Naive thymus-derived CD8-positive, alpha-beta T cell (primary cell): ENCODE measurements at regions of chr1 and their contacts with region 1.

Region 1: GRCh38 chr1:43706598-43707495 is 489 bp upstream of the ST3GAL3 start:
- DNase-seq: peak; percentile 85 to 93 (median 88)
- ATAC-seq: peak; percentile 97
- H3K4me3 Mint-ChIP-seq: peak overlapping the region; percentile 80 to 92 (median 87)
- H3K27ac Mint-ChIP-seq: peak overlapping the region in 8 of 10 donors; percentile 8 to 91 (median 84)
- H3K4me1 Mint-ChIP-seq: peaks cover 23 to 36% (median 32%) of the 10 kb centered on the region in 4 donors
- H3K27me3 Mint-ChIP-seq: no peaks in the 10 kb centered on the region

Region 2: DNA sequence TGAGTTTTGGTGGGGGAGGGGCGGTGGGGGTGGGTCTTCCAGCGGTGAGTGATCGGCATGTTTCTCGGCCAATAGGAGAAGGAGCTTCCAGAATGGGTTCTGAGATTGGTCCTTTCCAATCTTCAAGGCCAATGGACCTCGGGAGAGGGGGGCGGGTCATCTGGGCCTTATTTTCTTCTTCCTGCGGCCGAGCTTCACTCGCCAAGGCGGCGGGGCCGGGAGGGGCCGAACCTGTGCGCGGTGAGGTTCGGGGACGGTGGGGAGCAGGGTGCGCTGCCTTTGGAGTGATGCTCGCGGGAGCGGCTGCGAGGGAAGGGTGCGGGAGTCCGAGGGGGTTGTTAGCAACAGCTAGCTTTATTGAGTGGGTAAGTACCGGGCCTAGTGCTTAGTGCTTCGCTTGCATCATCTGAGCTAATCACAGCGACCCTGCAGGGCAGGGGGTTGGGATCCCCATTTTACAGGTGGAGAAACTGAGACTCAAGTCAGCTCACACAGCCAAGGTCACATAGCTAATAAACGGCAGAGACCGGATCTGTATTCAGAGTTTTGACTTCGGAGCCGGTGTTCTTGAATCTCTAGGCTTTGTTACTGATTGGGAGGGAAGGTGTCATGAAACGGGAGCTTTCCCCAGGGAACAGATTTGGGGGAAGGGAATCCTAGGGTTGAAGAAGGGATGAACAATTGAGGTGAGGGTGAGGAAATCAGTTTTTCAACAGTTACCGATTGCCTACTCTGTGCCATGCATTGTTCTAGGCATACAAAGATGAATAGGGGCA is 56.3 kb before region 1 on chr1:
- POLR2A ChIA-PET with region 1: interaction called, 10 read pairs
- DNase-seq: peak in 9 of 10 donors; percentile 72 to 97 (median 89)
- ATAC-seq: peak; percentile 75 to 76
- H3K4me3 Mint-ChIP-seq: peak overlapping the region; percentile 94 to 100 (median 99)
- H3K27ac Mint-ChIP-seq: peak overlapping the region; percentile 89 to 99 (median 98)
- H3K4me1 Mint-ChIP-seq: peaks cover 23 to 42% (median 37%) of the 10 kb centered on the region in 4 donors
- H3K27me3 Mint-ChIP-seq: peaks cover 0 to 1% (median 0%) of the 10 kb centered on the region in 5 donors